Endothelial cell of umbilical vein (primary cell): ENCODE measurements at regions of chr17 and their contacts with region 1.

Region 1: DNA sequence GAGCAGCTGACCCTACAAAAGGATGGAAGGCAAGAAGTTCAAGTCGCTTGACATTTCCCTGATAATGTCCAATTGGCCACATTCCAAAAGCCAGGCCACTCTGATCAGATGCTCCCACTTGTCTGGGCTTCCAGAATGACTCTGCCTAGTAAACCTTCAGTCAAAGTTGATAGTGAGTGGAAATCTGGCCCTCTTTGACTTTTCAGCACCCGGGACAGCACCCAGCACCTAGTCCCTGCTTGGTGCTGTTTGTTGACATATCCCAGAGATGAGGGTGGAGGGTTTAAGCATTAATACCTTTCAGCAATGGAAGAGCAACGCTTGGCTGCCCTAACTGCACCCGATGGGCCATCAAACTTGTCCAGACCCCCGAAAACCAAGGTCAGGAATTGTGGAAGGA is 131.3 kb downstream of the AIPL1 start:
- DNase-seq: peak; percentile 53
- H3K4me3 ChIP-seq: no peak overlapping the region
- H3K27ac ChIP-seq: no peak overlapping the region
- H3K4me1 ChIP-seq: no peaks in the 10 kb centered on the region
- H3K27me3 ChIP-seq: peaks cover 0 to 6% of the 10 kb centered on the region in 2 experiments
- CTCF ChIP-seq: no peak
- POLR2A ChIP-seq: no peak

Region 2: DNA sequence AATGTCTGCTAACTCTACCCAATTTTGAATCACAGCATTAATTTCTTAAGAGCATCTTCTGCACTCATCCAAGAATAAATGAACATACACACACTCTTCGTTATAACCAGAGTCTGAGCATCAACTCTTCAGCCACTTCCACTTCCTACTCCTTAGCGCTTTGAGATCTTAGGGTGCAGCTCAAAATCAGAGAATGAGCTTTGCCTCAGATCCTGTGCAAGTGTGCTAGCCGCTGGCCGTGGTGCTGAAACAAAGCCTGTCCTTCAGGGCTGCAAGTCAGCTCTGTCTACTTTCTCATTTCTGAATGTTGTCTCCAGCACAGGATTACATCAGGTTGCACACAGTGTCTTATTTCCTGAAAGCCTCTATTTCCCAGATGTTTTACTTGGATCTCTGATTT is 34.2 kb before region 1 on chr17:
- CTCF ChIA-PET with region 1: no interaction called
- POLR2A ChIA-PET with region 1: no interaction called
- dilution Hi-C with region 1: no loop called
- intact Hi-C with region 1: loop called (anchors 5 kb)
- DNase-seq: peak; percentile 60
- H3K4me3 ChIP-seq: no peak overlapping the region
- H3K27ac ChIP-seq: no peak overlapping the region
- H3K4me1 ChIP-seq: no peaks in the 10 kb centered on the region
- H3K27me3 ChIP-seq: peaks cover 0 to 6% of the 10 kb centered on the region in 2 experiments
- CTCF ChIP-seq: no peak
- POLR2A ChIP-seq: no peak